ENCODE measurements at regions of chr4 and their contacts with region 1.

Region 1: DNA sequence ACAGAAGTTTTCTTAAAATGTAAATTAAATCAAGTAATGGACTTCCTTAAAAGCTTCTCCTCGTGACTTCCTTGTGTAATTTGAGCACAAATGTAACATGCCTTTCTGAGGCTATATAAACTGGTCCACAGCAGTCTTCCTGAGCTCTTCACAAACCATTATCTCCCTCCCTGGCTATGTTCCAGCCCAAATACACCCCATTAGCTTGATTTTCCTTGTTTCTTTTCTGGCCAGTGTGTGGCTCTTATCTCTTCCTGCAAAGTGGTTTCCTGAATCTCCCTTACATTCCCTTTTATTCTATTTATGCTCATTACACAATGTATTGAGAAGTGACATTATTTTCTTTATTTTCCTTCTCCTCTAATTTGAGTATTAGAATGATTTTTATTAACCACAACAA is 1085.3 kb upstream of the PCDH10 start:
- DNase-seq: no peak
- H3K4me3 ChIP-seq: no peak overlapping the region
- H3K27ac ChIP-seq: no peak overlapping the region
- H3K4me1 ChIP-seq: no peaks in the 10 kb centered on the region
- H3K27me3 ChIP-seq: no peaks in the 10 kb centered on the region
- CTCF ChIP-seq: no peak
- POLR2A ChIP-seq: no peak

Region 2: DNA sequence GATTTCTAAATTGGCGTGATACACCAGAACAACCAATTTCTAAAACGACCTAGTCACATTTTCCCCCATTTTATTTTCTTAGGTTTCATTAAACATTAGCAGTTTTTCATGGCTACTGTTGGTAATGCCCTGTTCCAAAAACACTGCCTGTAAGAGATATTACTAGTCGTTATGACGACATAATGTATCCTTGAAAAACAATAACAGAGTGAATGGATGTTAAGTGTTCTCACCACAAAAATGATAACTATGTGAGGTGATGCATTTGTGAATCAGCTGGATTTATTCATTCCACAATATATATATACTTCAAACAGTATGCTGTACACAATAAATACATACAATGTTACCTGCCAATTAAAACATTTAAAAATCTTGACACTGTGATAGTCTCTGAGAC is 62.3 kb before region 1 on chr4:
- intact Hi-C with region 1: loop called (anchors 10 kb)
- DNase-seq: no peak
- H3K4me3 ChIP-seq: no peak overlapping the region
- H3K27ac ChIP-seq: no peak overlapping the region
- H3K4me1 ChIP-seq: no peaks in the 10 kb centered on the region
- H3K27me3 ChIP-seq: no peaks in the 10 kb centered on the region
- CTCF ChIP-seq: no peak
- POLR2A ChIP-seq: no peak

Region 3: GRCh38 chr4:132085105-132085504 is 21.3 kb after region 1 on chr4:
- intact Hi-C with region 1: no loop called
- DNase-seq: no peak
- H3K4me3 ChIP-seq: no peak overlapping the region
- H3K27ac ChIP-seq: no peak overlapping the region
- H3K4me1 ChIP-seq: no peaks in the 10 kb centered on the region
- H3K27me3 ChIP-seq: no peaks in the 10 kb centered on the region
- CTCF ChIP-seq: no peak
- POLR2A ChIP-seq: no peak

Region 4: DNA sequence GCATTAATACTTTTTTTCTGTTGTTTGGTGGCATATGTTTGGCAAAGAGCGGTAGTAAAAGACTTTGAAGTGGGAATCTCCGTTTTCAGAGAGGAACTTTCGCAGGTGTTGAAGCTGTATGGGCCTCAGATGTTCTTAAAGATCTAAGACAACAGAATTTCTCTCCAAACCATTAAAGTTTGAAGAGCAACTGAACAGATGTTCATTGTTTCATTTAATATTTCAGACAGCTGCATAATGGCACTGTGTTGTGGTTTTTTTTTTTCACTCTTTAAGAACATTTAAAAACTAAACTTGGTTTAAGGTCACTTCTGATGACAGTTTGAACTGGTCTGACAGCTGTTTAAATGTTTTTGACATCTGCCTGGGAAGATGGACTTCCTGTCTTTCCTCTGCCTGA is 202.5 kb after region 1 on chr4:
- intact Hi-C with region 1: no loop called
- DNase-seq: no peak
- H3K4me3 ChIP-seq: no peak overlapping the region
- H3K27ac ChIP-seq: no peak overlapping the region
- H3K4me1 ChIP-seq: no peaks in the 10 kb centered on the region
- H3K27me3 ChIP-seq: no peaks in the 10 kb centered on the region
- CTCF ChIP-seq: no peak
- POLR2A ChIP-seq: no peak